Mammary epithelial cell (primary cell): ENCODE measurements at regions of chrX and their contacts with region 1.

Region 1: GRCh38 chrX:74133156-74133796 is 170.7 kb upstream of the ZCCHC13 start:
- DNase-seq: peak; percentile 40
- H3K4me3 ChIP-seq: no peak overlapping the region
- H3K27ac ChIP-seq: no peak overlapping the region
- H3K4me1 ChIP-seq: no peaks in the 10 kb centered on the region
- H3K27me3 ChIP-seq: no peaks in the 10 kb centered on the region
- CTCF ChIP-seq: peak; percentile 68 to 74

Region 2: GRCh38 chrX:73855546-73855945 is 277.7 kb before region 1 on chrX:
- CTCF ChIA-PET with region 1: no interaction called
- dilution Hi-C with region 1: loop called (anchors 5 kb)
- in situ Hi-C with region 1: loop called (anchors 5 kb)
- intact Hi-C with region 1: loop called (anchors 1 kb)
- DNase-seq: peak; percentile 60
- H3K4me3 ChIP-seq: no peak overlapping the region
- H3K27ac ChIP-seq: no peak overlapping the region
- H3K4me1 ChIP-seq: no peaks in the 10 kb centered on the region
- H3K27me3 ChIP-seq: no peaks in the 10 kb centered on the region
- CTCF ChIP-seq: peak; percentile 85 to 88

Region 3: DNA sequence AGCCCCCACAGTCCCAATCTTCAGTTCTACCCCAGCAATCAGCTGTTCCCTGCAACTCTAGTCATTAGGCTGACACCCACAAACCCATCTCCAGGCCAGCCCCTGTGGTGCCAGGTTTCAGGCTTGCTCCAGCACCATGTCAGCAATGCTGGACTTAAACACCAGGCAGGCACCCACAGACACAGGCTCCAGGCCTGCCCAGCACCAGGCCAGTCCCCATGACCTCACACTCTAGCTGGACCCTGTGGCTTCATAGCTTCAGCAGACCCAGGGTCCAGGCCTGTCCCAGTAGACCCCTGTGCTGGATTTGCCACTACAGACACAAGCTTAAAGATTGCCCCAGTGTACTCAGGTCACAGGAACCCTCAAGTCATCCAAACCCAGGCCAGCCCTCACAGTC is 270.0 kb before region 1 on chrX:
- CTCF ChIA-PET with region 1: no interaction called
- dilution Hi-C with region 1: loop called (anchors 5 kb)
- in situ Hi-C with region 1: loop called (anchors 5 kb)
- intact Hi-C with region 1: no loop called
- DNase-seq: no peak
- H3K4me3 ChIP-seq: no peak overlapping the region
- H3K27ac ChIP-seq: no peak overlapping the region
- H3K4me1 ChIP-seq: no peaks in the 10 kb centered on the region
- H3K27me3 ChIP-seq: peaks cover 2% of the 10 kb centered on the region
- CTCF ChIP-seq: no peak

Region 4: GRCh38 chrX:74065831-74066390 is 67.4 kb before region 1 on chrX:
- CTCF ChIA-PET with region 1: no interaction called
- dilution Hi-C with region 1: loop called (anchors 5 kb)
- in situ Hi-C with region 1: no loop called
- intact Hi-C with region 1: no loop called
- DNase-seq: no peak
- H3K4me3 ChIP-seq: no peak overlapping the region
- H3K27ac ChIP-seq: no peak overlapping the region
- H3K4me1 ChIP-seq: peaks cover 13% of the 10 kb centered on the region
- H3K27me3 ChIP-seq: no peaks in the 10 kb centered on the region
- CTCF ChIP-seq: no peak

Region 5: DNA sequence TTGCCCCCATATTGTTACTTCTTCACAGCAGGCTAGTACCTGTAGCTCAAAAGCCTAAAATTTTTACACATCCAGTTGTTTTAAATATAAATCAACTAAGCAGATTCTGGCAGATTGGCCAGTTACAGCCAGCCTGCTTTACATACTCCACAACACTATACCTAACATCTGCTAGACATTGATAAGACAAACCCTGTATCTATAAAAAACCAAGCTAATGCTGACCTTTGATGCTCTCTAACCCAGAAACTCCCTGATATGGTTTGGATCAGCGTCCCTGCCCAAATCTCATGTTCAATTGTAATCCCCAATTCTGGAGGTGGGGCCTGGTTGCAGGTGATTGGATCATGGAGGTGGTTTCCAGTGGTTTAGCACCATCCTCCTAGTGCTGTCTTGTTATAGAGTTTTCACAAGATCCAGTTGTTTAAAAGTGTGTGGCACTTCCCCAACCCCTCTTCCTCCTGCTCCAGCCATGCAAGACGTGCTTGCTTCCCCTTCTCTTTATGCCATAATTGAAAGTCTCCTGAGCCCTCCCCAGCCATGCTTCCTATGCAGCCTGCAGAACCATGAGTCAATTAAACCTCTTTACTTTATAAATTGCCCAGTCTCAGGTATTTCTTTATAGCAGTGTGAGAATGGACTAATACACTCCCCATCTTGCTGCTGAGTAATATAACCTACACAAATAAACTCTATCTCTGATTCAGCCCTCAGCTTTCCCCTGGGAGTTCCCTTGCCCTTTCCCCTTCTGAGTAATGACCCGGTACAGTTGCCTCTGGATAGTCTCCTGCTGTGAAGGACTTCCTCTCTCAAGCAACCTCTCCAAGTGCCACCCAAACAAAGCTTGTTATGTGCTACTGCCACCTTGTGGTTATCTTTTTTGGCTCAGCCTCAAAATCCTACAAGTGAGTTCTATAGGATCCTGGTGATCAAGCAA is 210.3 kb after region 1 on chrX:
- CTCF ChIA-PET with region 1: no interaction called
- dilution Hi-C with region 1: no loop called
- in situ Hi-C with region 1: no loop called
- intact Hi-C with region 1: loop called (anchors 1 kb)
- DNase-seq: peak; percentile 92
- H3K4me3 ChIP-seq: no peak overlapping the region
- H3K27ac ChIP-seq: no peak overlapping the region
- H3K4me1 ChIP-seq: no peaks in the 10 kb centered on the region
- H3K27me3 ChIP-seq: no peaks in the 10 kb centered on the region
- CTCF ChIP-seq: peak; percentile 63 to 65